Heart left ventricle (tissue), 16 donors: ENCODE measurements at regions of chr14 and their contacts with region 1.

Region 1: GRCh38 chr14:90767899-90768298 is 48.3 kb downstream of the TTC7B start:
- DNase-seq: no peak
- ATAC-seq: no peak
- H3K4me3 ChIP-seq: no peak overlapping the region
- H3K27ac ChIP-seq: no peak overlapping the region
- H3K4me1 ChIP-seq: no peaks in the 10 kb centered on the region
- H3K27me3 ChIP-seq: no peaks in the 10 kb centered on the region
- CTCF ChIP-seq: no peak
- POLR2A ChIP-seq: no peak

Region 2: DNA sequence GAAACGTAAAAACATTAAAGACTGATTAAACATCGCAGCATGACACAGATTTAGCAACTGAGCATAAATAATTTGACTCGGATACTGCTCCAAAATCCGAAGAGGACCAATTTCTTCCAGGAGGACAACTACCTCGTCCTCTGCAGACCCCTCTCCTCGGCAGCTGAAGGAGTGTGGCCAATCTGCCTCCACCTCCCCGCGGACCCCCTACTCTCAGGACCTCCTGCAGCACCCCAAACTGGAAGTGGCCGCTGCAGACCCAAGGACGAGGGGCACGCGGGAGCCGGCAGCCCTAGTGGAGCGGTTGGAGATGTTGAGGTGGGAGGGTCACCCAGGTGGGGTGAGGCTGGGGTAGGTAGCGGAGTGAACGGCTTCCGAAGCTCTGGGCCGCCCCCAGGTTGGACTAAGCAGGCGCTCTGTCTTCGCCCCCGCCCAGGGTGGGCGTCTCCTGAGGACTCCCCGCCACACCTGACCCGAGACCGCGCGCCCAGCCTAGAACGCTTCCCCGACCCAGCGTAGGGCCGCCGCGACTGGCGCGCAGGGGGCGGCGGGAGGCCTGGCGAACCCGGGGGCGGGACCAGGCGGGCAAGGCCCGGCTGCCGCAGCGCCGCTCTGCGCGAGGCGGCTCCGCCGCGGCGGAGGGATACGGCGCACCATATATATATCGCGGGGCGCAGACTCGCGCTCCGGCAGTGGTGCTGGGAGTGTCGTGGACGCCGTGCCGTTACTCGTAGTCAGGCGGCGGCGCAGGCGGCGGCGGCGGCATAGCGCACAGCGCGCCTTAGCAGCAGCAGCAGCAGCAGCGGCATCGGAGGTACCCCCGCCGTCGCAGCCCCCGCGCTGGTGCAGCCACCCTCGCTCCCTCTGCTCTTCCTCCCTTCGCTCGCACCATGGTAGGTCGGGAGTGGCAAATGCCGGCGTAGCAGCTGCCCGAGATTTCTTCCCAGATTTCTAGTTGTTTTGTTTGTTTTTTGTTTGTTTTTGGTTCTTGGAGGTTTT is 371.3 kb before region 1 on chr14 and contains the start of gene CALM1:
- intact Hi-C with region 1: no loop called
- DNase-seq: peak; percentile 93 to 98 (median 96)
- ATAC-seq: peak; percentile 65 to 87 (median 80)
- H3K4me3 ChIP-seq: peak within 1 kb of the TSS; percentile 68 to 100 (median 98)
- H3K27ac ChIP-seq: peak within 1 kb of the TSS; percentile 81 to 97 (median 93)
- H3K4me1 ChIP-seq: peaks cover 10 to 39% (median 32%) of the 10 kb centered on the region in 12 donors
- H3K27me3 ChIP-seq: no peaks in the 10 kb centered on the region
- CTCF ChIP-seq: peak in 2 of 12 donors; percentile 3 to 13
- POLR2A ChIP-seq: peak; percentile 67 to 99
- total RNA-seq, gene CALM1: 397 to 784 (median 503) TPM

Region 3: GRCh38 chr14:90894241-90894640 is 126.3 kb after region 1 on chr14:
- intact Hi-C with region 1: loop called in 1 of 10 experiments (anchors 5 kb)
- DNase-seq: no peak
- ATAC-seq: no peak
- H3K4me3 ChIP-seq: no peak overlapping the region
- H3K27ac ChIP-seq: no peak overlapping the region
- H3K4me1 ChIP-seq: peaks cover 0 to 7% (median 0%) of the 10 kb centered on the region in 12 donors
- H3K27me3 ChIP-seq: no peaks in the 10 kb centered on the region
- CTCF ChIP-seq: no peak
- POLR2A ChIP-seq: no peak